Cardiac septum (tissue), 1 donor: ENCODE measurements at regions of chr7 and their contacts with region 1.

Region 1: GRCh38 chr7:74479961-74480829 is 26.5 kb downstream of the GTF2IRD1 start:
- DNase-seq: peak; percentile 92

Region 2: GRCh38 chr7:74449809-74450397 is 30.3 kb before region 1 on chr7:
- intact Hi-C with region 1: loop called (anchors 2 kb)
- DNase-seq: no peak

Region 3: DNA sequence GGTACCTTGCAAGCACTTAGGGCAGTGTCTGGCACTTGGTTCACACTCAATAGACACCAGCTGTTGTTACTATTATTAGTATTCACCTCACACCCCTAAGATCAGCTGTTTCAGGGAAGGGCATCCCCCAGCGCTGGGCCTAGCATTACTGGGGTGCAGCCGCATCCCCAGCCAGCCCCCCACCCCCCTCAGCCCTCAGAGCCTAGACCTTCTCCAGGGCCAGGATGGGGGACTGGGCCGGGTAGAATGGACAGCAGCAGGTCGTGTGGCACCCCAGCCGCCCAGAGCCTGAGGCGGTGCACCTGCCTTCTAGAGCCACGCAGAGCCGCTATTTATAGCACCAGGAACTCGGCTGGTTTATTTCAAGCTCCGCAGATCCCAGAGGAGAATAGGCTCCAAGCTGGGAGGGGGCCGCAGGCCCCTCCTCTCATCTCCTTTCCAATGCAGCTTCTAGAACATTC is 34.0 kb after region 1 on chr7:
- intact Hi-C with region 1: loop called (anchors 1 kb)
- DNase-seq: peak; percentile 80